ENCODE measurements at regions of chr7 and their contacts with region 1.

Region 1: GRCh38 chr7:23863209-23863798 is 153.3 kb downstream of the STK31 start:
- DNase-seq: peak; percentile 16
- ATAC-seq: 0 out of 3 replicates have a peak, but pooled peaks have one; percentile 41
- H3K4me3 ChIP-seq: no peak overlapping the region
- H3K27ac ChIP-seq: no peak overlapping the region
- H3K4me1 ChIP-seq: no peaks in the 10 kb centered on the region
- H3K27me3 ChIP-seq: no peaks in the 10 kb centered on the region
- CTCF ChIP-seq: peak; percentile 58
- EP300 ChIP-seq: no peak
- POLR2A ChIP-seq: no peak
- RAD21 ChIP-seq: no peak

Region 2: GRCh38 chr7:24108906-24109376 is 245.6 kb after region 1 on chr7:
- CTCF ChIA-PET with region 1: no interaction called
- POLR2A ChIA-PET with region 1: no interaction called
- in situ Hi-C with region 1: no loop called
- intact Hi-C with region 1: loop called (anchors 10 kb)
- DNase-seq: peak; percentile 83
- ATAC-seq: peak; percentile 99
- H3K4me3 ChIP-seq: no peak overlapping the region
- H3K27ac ChIP-seq: no peak overlapping the region
- H3K4me1 ChIP-seq: peaks cover 22% of the 10 kb centered on the region
- H3K27me3 ChIP-seq: no peaks in the 10 kb centered on the region
- CTCF ChIP-seq: no peak
- EP300 ChIP-seq: no peak
- POLR2A ChIP-seq: no peak
- RAD21 ChIP-seq: no peak

Region 3: GRCh38 chr7:24401628-24402593 is 538.6 kb after region 1 on chr7:
- CTCF ChIA-PET with region 1: no interaction called
- POLR2A ChIA-PET with region 1: no interaction called
- in situ Hi-C with region 1: loop called (anchors 10 kb)
- intact Hi-C with region 1: no loop called
- DNase-seq: peak; percentile 31
- ATAC-seq: peak; percentile 56; the same call in 2 of the 3 replicates
- H3K4me3 ChIP-seq: no peak overlapping the region
- H3K27ac ChIP-seq: no peak overlapping the region
- H3K4me1 ChIP-seq: no peaks in the 10 kb centered on the region
- H3K27me3 ChIP-seq: no peaks in the 10 kb centered on the region
- CTCF ChIP-seq: peak; percentile 50
- EP300 ChIP-seq: no peak
- POLR2A ChIP-seq: no peak
- RAD21 ChIP-seq: no peak; the same call in 1 of the 2 replicates

Measured in HepG2 (cell line).